AG04449 (cell line): ENCODE measurements at regions of chr10 and their contacts with region 1.

Region 1: DNA sequence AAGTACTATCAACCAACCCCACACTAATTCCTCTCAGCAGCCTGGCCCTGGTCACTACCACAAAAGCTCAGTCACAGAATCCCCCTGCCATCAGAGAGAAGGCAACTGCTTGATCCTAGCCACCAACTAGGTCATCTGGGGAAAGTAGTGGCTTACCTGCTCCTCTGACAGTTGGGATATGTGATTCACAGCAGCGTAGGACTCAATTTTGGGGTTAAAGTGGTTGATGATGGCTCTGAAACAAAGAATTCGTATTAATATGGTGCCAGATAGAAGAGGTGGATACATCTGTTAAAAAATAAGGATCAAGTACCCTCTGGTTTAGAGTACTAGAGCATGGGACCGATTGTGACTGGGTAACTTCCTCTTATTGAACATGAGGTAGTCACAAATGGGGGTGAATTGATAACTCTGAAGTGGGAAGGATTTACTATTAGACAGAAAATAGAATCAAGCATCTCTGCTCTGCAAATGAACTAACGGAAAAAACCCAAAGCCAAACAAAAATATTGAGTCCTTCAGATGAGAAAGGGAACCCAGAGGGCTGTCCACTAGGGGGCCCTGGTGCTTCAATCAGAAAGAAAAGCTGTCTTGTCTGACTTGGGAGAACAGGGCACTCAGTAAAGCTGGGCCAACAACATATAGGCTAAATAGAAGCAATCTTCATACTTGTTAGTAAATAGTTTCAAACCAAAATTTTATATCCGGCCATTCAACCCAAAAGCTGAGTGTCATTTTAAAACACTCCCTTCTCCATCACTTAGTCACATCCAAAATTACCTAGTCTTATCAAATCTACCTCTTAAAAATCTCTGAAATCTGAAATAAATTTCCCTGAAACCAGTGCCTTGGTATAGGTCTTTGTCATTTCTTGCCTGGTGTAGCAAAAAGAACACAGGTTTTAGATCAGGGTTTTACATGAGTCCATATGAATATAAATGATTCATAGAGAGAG is 45.9 kb upstream of the KCNIP2 start:
- DNase-seq: peak; percentile 45
- H3K4me3 ChIP-seq: no peak overlapping the region
- CTCF ChIP-seq: peak; percentile 84

Region 2: DNA sequence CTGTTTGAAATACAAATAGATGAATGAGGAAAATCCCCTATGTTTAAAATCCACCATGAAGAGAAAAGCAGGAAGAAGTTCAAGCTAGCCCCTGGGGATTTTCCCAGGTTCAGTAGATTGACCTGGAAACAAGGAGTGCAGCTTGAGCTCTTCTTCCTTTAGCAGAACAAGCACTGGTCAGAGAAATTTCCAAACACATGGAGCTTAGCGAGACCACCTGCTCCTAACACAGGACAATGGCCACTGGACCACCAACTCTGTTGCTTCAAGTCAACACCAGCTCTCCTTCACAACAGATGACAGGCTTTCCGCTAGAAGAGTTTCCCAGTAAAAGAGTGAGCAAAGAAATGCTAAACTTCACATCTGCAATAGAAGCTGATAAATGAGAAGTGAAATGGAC is 185.2 kb before region 1 on chr10:
- CTCF ChIA-PET with region 1: no interaction called
- POLR2A ChIA-PET with region 1: no interaction called
- DNase-seq: no peak
- H3K4me3 ChIP-seq: no peak overlapping the region
- CTCF ChIP-seq: no peak

Region 3: DNA sequence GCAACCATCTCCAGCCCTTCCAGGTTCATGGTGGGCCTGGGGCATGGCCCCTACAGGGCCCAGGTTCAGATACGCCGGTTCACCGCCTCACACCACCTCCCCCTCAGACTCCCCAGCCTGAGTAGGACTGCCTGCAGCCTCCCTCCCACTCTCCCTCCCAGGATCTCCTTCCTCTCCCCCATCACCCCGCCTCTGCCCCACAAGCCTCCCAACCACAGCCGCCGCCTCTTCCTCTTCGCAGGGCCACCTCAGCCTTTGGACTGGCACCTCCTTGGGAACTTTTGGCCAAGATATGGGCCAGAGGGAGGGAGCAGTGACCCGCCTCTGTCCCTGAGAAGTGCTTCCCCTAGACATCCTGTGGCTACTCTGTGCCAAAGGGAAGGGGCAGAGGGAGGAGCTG is 55.2 kb before region 1 on chr10:
- CTCF ChIA-PET with region 1: interaction called, 27 read pairs
- POLR2A ChIA-PET with region 1: no interaction called
- DNase-seq: no peak
- H3K4me3 ChIP-seq: no peak overlapping the region
- CTCF ChIP-seq: no peak

Region 4: GRCh38 chr10:101848894-101849351 is 40.6 kb before region 1 on chr10:
- CTCF ChIA-PET with region 1: interaction called, 11 read pairs
- POLR2A ChIA-PET with region 1: no interaction called
- DNase-seq: no peak
- H3K4me3 ChIP-seq: no peak overlapping the region
- CTCF ChIP-seq: no peak

Region 5: GRCh38 chr10:101903827-101904550 is 14.5 kb after region 1 on chr10:
- CTCF ChIA-PET with region 1: interaction called, 29 read pairs
- POLR2A ChIA-PET with region 1: no interaction called
- DNase-seq: no peak
- H3K4me3 ChIP-seq: no peak overlapping the region
- CTCF ChIP-seq: no peak

Region 6: DNA sequence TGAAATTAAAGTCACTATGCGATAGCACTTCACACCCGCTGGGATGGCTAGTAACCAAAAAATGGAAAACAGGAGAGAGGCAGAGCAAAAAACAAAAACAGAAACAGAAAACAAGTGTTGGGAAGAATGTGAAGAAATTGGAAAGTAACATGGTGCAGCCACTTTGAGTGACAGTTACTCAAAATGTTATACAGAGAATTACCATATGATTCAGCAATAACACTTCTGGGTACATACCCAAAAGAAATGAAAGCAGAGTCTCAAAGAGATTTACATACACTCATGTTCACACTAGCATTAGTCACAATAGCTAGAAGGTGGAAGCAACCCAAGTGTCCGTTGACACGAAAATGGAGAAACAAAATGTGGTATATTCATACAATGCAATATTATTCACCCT is 42.6 kb after region 1 on chr10:
- CTCF ChIA-PET with region 1: interaction called, 12 read pairs
- POLR2A ChIA-PET with region 1: no interaction called
- DNase-seq: no peak
- H3K4me3 ChIP-seq: no peak overlapping the region
- CTCF ChIP-seq: no peak

Region 7: GRCh38 chr10:101961591-101962498 is 72.3 kb after region 1 on chr10:
- CTCF ChIA-PET with region 1: interaction called, 22 read pairs
- POLR2A ChIA-PET with region 1: no interaction called
- DNase-seq: no peak
- H3K4me3 ChIP-seq: no peak overlapping the region
- CTCF ChIP-seq: no peak

Region 8: DNA sequence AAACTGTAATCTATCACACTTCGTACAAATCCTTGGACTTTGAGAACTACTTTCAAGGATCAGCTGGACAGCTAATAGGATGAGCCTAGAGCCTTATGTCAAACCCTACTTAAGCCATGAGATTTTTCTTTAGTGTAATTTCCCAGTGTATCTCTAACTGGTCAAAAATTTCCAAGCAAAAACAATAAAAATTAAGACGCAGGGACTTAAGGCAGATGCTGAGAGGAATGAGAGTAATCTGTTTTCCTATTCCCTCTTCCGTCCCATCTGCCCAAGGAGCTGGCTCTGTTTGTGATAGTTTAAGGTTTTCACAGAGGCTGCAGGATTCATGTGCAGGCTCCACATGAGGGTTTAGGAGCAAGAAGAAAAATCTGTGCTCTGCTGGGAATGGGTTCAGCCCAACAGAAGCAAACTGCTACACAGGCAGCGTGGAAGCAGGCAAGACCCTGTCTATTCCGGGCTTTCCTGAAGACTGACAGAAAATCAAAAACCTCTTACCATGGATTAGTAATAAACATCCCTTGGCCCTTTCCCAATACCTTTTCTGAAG is 104.2 kb after region 1 on chr10:
- CTCF ChIA-PET with region 1: interaction called, 14 read pairs
- POLR2A ChIA-PET with region 1: no interaction called
- DNase-seq: no peak
- H3K4me3 ChIP-seq: no peak overlapping the region
- CTCF ChIP-seq: no peak

Region 9: GRCh38 chr10:102033787-102034186 is 144.3 kb after region 1 on chr10:
- CTCF ChIA-PET with region 1: no interaction called
- POLR2A ChIA-PET with region 1: no interaction called
- DNase-seq: no peak
- H3K4me3 ChIP-seq: no peak overlapping the region
- CTCF ChIP-seq: no peak

Region 10: GRCh38 chr10:102347241-102347828 is 457.8 kb after region 1 on chr10:
- CTCF ChIA-PET with region 1: no interaction called
- POLR2A ChIA-PET with region 1: no interaction called
- DNase-seq: no peak
- H3K4me3 ChIP-seq: no peak overlapping the region
- CTCF ChIP-seq: peak; percentile 50